ENCODE measurements at regions of chr7 and their contacts with region 1.

Region 1: DNA sequence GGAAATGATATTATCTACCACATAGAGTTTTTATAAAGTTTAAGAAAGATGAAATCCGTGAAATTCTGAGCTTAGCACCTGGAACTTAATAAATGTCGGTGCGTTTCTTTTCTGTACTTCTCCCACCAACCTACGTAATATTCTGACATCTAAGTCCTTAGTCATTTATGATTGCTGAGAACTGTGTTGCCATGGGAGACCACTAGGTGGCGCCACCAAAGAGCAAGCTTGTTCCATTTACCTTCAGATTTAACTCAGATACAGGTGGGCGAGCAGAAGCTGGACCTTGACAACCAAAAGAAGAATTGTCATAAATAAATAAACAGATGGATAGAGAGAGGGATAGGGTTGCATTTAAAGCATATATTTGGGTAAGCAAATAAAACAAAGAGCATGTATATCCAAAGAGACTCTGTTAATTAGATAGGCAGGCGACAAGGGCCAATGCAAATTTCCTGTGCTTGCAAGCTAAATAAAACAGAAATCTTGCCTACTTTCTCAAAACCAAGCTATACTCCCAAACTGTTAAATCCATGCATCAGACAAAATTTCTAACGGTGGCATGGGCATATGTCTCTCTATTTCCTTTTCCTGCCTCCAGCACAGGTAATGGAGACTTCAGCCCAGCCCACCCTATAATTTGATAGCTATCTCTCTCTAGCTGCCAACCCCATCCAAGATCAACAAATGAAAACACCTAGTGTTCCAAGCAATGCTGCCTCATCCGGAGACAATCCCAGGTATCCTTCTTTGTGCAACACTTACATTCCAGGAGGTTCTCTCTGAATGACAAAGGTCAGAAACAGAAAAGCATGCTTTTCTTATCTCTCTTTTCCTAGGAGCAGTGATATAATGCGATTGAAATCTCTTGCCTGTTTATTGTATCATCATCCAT is 699.6 kb downstream of the INHBA start:
- DNase-seq: peak; percentile 13
- CTCF ChIP-seq: peak; percentile 89

Region 2: DNA sequence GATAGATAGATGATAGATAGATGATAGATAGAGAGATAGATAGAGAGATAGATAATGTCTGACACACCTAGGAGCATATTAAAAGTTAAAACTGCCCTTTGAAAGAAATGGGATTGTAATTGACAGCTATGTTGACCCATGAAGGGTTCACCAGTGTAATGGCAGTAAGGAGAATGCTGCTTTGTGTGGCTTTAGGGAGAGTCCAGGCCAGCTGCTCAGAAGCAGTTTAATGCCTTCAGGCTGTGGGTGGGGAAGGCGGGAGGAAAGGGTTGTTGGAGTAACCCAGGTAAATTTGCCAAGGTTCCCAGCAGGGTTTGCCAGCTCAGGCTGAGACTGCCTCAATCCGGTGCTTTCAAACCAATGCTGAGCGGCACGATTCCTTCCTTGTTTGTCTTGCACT is 62.3 kb after region 1 on chr7:
- in situ Hi-C with region 1: no loop called
- DNase-seq: no peak
- CTCF ChIP-seq: no peak

Region 3: DNA sequence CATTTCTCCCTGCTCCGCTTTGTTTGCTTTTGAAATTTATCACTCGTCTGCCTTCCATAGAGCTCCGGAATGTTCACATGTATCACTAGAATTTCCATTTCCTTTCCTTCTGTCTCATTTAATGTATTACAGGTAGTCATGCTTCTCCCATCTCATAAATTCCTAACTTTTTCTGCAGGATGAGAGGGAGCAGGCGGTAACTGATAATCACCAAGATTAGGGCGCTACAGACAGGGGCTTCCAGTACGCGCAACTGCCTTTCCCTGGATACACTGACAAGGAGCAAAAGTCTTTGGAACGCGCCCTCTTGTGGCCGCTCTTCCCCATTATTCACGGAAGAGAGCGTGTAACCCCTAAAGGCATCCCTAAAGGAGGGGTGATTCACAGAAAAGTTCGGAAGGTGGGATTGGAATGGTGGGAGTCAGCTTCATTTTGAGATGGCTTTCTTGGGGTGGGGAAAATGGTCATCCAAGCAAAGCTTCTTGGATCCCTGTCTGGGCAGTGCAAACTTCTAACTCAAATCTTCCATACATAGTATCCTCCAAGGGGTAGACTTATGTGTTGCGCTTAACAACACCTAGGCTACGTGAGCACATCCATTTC is 693.1 kb after region 1 on chr7:
- in situ Hi-C with region 1: loop called (anchors 25 kb)
- DNase-seq: no peak
- CTCF ChIP-seq: peak; percentile 65

Measured in GM13977 (cell line).